ENCODE measurements at regions of chr3 and their contacts with region 1.

Region 1: GRCh38 chr3:60046210-60046609 is 996.4 kb upstream of the CFAP20DC start:
- DNase-seq: no peak
- ATAC-seq: no peak
- H3K4me3 ChIP-seq: no peak overlapping the region
- H3K27ac ChIP-seq: no peak overlapping the region
- H3K4me1 ChIP-seq: no peaks in the 10 kb centered on the region
- H3K27me3 ChIP-seq: no peaks in the 10 kb centered on the region
- CTCF ChIP-seq: no peak

Region 2: GRCh38 chr3:60125686-60126085 is 79.5 kb after region 1 on chr3:
- intact Hi-C with region 1: no loop called
- DNase-seq: no peak
- ATAC-seq: no peak
- H3K4me3 ChIP-seq: no peak overlapping the region
- H3K27ac ChIP-seq: no peak overlapping the region
- H3K4me1 ChIP-seq: no peaks in the 10 kb centered on the region
- H3K27me3 ChIP-seq: no peaks in the 10 kb centered on the region
- CTCF ChIP-seq: no peak

Region 3: GRCh38 chr3:60392501-60392985 is 346.3 kb after region 1 on chr3:
- intact Hi-C with region 1: loop called in 1 of 2 experiments (anchors 1 kb)
- DNase-seq: no peak
- ATAC-seq: no peak
- H3K4me3 ChIP-seq: no peak overlapping the region
- H3K27ac ChIP-seq: no peak overlapping the region
- H3K4me1 ChIP-seq: no peaks in the 10 kb centered on the region
- H3K27me3 ChIP-seq: no peaks in the 10 kb centered on the region
- CTCF ChIP-seq: no peak

Measured in psoas muscle (tissue), 8 donors.